ENCODE measurements at regions of chr4 and their contacts with region 1.

Region 1: GRCh38 chr4:102826890-102827673 is at the start of gene UBE2D3:
- DNase-seq: peak; percentile 92
- H3K4me3 Mint-ChIP-seq: no peak within 1 kb of the TSS
- H3K27ac Mint-ChIP-seq: no peak within 1 kb of the TSS
- H3K4me1 Mint-ChIP-seq: peaks cover 38% of the 10 kb centered on the region
- H3K27me3 Mint-ChIP-seq: no peaks in the 10 kb centered on the region
- total RNA-seq, gene UBE2D3: 480 and 507 TPM in 2 replicates

Region 2: GRCh38 chr4:102299354-102300107 is 527.6 kb before region 1 on chr4:
- intact Hi-C with region 1: no loop called
- DNase-seq: peak; percentile 7
- H3K4me3 Mint-ChIP-seq: no peak overlapping the region
- H3K27ac Mint-ChIP-seq: no peak overlapping the region
- H3K4me1 Mint-ChIP-seq: peaks cover 7% of the 10 kb centered on the region
- H3K27me3 Mint-ChIP-seq: no peaks in the 10 kb centered on the region

Region 3: DNA sequence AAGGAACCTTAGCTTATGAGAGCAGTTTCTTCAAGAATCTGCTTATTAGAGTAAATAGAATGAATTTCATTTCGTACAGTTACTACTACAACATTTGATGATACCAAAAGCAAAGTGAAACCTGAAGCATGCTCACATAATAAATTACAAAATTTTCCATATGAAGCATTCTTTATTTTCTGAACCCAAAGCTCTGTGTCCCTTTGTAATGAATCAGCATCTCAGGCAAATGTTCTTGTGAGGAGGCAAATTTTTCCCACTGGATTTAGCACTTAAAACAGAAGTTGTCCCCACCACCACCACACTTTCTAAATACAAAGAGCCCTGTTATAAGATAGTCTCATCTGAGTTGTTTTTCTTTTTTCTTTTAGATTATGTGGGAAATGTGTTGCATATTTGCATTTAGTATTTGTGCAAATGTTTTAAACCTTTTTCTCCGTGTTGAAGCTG is 396.6 kb before region 1 on chr4:
- intact Hi-C with region 1: loop called (anchors 5 kb)
- DNase-seq: no peak
- H3K4me3 Mint-ChIP-seq: peak overlapping the region; percentile 87
- H3K27ac Mint-ChIP-seq: peak overlapping the region; percentile 82
- H3K4me1 Mint-ChIP-seq: peaks cover 15% of the 10 kb centered on the region
- H3K27me3 Mint-ChIP-seq: peaks cover 5% of the 10 kb centered on the region

Region 4: DNA sequence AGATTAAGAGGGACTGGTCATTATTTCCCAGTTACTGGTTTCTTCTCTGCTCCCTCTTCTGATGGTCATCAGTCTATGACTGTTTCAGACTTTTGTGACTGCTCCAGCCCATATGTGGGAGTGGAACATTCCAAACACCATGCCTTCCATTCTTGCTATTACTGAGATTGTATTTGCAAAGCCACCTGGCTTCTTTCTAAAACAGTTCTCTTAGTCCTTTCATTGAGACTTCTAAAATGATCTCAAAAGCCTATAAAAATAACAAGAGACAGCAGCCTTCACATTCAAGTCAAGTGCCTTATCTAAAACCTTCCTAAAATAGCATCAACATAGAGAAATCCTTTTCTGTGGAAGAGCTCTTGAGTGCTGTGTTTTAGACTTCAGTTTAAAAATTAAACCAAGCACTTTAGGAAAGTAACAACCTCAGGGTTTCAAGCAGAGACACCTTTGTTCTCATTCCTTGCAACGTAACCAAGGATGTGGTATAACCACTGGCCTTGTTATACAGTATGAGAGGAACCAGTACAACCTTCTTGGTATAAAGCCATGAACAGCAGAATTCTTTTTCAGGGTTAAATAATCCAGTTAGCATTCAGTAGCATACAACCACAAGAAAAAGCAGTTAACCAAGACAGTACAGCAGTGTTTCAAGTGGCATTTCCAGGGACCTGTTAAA is 228.9 kb before region 1 on chr4:
- intact Hi-C with region 1: loop called (anchors 1 kb)
- DNase-seq: peak; percentile 34
- H3K4me3 Mint-ChIP-seq: peak overlapping the region; percentile 37
- H3K27ac Mint-ChIP-seq: peak overlapping the region; percentile 89
- H3K4me1 Mint-ChIP-seq: peaks cover 78% of the 10 kb centered on the region
- H3K27me3 Mint-ChIP-seq: no peaks in the 10 kb centered on the region

Region 5: GRCh38 chr4:102760645-102761295 is 66.3 kb before region 1 on chr4 and contains the start of gene MANBA:
- intact Hi-C with region 1: loop called (anchors 1 kb)
- DNase-seq: peak; percentile 77
- H3K4me3 Mint-ChIP-seq: peak within 1 kb of the TSS; percentile 96
- H3K27ac Mint-ChIP-seq: peak within 1 kb of the TSS; percentile 90
- H3K4me1 Mint-ChIP-seq: peaks cover 31% of the 10 kb centered on the region
- H3K27me3 Mint-ChIP-seq: peaks cover 13% of the 10 kb centered on the region
- total RNA-seq, gene MANBA: 7.5 and 8.0 TPM in 2 replicates

Region 6: DNA sequence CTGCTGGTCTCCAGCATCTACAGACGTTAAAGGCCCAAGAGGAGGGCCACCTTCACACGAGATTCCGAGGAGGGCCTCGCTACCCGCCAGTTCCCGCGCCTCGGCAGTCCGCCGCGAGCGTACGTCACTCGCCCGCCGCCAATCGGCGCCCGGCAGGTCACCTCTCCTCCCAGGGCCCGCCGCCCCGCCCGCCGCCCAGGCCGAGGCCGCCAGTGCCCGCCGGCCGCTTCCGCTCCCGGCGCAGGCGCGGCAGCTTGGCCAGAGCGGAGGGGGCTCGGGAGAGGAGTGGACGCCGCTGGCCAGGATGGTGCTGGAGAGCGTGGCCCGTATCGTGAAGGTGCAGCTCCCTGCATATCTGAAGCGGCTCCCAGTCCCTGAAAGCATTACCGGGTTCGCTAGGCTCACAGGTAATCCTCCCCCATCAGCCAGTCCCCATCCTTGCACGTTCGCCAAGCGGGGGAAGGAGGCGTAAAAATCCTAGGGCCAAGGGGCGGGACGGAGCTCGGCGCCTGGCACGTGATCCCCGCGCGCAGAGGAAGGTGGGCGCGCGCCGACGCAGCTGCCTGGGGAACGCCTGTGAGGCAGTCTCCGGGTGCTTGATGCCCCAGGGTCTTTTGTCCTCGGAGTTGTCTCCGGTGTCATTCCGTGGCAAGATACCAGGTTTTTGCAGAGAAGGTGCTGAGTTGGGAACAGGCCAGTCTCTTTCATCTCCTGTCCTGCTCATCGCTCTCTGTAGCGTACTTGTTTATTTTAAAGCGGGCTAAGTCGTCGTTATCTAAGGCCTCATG is 41.9 kb after region 1 on chr4 and contains the start of gene CISD2:
- intact Hi-C with region 1: loop called (anchors 1 kb)
- DNase-seq: peak; percentile 91
- H3K4me3 Mint-ChIP-seq: peak within 1 kb of the TSS; percentile 93
- H3K27ac Mint-ChIP-seq: peak within 1 kb of the TSS; percentile 99
- H3K4me1 Mint-ChIP-seq: peaks cover 69% of the 10 kb centered on the region
- H3K27me3 Mint-ChIP-seq: no peaks in the 10 kb centered on the region
- total RNA-seq, gene CISD2: 41.2 and 50.7 TPM in 2 replicates

Region 7: DNA sequence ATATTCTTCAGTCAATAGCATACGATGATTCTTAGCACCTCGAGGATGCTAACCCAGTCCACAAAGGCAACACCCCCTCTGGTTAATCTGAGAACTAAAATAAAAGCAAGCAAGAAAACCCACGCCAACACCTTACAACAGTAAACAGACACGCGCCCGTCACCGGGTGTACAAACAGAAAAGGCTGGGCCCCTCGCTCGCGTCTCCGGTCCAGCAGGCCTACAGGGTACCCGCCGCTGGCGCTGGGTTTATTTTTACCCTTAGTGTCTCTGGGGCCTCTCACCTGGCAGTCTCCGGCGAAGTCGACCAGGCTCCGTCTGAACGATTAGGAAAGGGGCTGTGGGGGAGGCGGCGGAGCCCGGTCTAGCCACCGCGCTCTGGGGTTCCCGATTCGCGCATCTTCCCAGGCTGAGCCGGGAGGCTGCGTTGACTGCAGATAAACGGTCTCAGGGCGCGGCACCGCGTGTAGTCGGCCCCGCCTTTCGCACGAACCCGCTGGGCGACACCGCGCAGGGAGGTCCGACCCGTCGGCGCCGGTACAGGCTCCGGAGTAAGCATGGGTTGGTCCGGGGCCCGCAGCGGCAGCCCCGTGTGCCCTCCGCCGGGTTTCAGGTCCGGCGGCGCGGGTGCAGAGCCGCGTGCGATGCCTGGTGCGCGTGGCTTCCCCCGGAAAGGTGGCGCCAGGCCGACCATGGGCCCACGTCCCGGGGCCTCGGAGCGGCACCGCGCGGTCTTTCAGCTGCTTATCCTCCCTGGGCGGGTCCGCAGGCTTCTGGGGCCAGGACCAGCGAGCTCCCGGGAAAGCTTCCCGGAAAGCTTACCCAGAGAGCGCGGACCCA is 249.0 kb after region 1 on chr4:
- intact Hi-C with region 1: loop called (anchors 1 kb)
- DNase-seq: peak; percentile 60
- H3K4me3 Mint-ChIP-seq: peak overlapping the region; percentile 99
- H3K27ac Mint-ChIP-seq: peak overlapping the region; percentile 100
- H3K4me1 Mint-ChIP-seq: peaks cover 51% of the 10 kb centered on the region
- H3K27me3 Mint-ChIP-seq: no peaks in the 10 kb centered on the region

Region 8: GRCh38 chr4:103264905-103265304 is 437.8 kb after region 1 on chr4:
- intact Hi-C with region 1: no loop called
- DNase-seq: no peak
- H3K4me3 Mint-ChIP-seq: no peak overlapping the region
- H3K27ac Mint-ChIP-seq: no peak overlapping the region
- H3K4me1 Mint-ChIP-seq: no peaks in the 10 kb centered on the region
- H3K27me3 Mint-ChIP-seq: peaks cover 10% of the 10 kb centered on the region